ENCODE measurements at regions of chr11 and their contacts with region 1.

Region 1: DNA sequence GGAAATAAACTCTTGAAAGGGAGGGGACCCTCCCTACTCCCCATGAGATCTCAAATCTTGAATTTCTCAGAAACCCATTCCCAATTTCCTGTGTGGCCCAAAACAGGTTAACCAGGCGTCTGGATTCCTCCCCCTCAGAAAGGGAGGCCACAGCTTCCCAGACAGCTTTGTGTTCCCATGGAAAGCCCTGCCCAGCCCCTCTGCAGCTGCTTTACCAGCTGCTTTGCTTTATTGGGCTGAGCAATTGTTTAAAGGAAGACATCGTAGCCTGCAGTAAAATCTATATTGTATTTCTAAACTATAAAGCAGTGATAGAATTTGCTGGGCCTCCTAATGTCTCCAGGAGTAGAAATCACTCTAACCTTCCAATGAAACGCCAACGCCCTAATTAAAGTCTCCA is 97.4 kb downstream of the CHST1 start:
- DNase-seq: no peak
- H3K4me3 ChIP-seq: no peak overlapping the region
- H3K27ac ChIP-seq: no peak overlapping the region
- H3K4me1 ChIP-seq: no peaks in the 10 kb centered on the region
- H3K27me3 ChIP-seq: no peaks in the 10 kb centered on the region
- CTCF ChIP-seq: no peak

Region 2: DNA sequence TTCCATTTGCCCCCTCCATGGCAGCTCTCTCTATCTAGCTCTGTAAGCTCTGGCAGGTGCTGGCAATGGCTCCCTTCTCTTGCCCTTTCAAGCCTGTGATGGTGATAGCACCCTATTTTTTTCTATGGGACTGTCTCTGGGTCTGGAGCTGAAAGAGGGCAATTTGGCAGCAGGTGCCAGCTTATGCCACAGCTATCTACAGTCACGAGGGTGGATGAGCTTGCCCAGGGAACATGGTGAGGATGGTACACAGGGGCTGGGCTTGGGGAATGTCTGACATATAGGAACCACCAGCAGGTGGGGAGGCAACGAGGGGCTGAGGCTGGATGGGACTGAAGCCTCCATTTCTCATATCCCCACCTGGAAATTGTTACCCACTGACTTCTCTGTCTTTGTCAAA is 106.5 kb before region 1 on chr11:
- CTCF ChIA-PET with region 1: no interaction called
- dilution Hi-C with region 1: loop called (anchors 5 kb)
- in situ Hi-C with region 1: no loop called
- intact Hi-C with region 1: no loop called
- DNase-seq: no peak
- H3K4me3 ChIP-seq: no peak overlapping the region
- H3K27ac ChIP-seq: no peak overlapping the region
- H3K4me1 ChIP-seq: peaks cover 6% of the 10 kb centered on the region
- H3K27me3 ChIP-seq: no peaks in the 10 kb centered on the region
- CTCF ChIP-seq: no peak

Region 3: DNA sequence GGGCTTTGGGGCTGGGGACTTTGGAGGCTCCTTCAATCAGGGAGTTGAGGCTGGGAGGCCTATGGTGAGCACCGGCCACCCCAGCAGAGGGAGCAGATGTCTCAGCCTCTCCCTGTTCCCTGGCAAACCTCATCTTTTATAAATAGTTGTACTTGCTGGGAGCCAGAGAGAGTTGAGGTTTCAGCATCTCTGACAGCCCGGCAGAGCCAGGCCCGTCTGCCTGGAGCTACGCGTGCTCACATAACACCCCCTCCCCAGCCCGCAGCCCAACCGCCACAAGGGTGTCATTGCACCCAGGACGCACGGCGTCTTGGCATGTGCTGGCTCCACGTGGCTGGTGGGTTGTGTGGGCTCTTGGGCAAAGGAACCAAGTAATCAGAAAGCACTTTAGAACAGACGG is 29.7 kb before region 1 on chr11:
- CTCF ChIA-PET with region 1: no interaction called
- dilution Hi-C with region 1: loop called (anchors 5 kb)
- in situ Hi-C with region 1: no loop called
- intact Hi-C with region 1: no loop called
- DNase-seq: no peak
- H3K4me3 ChIP-seq: no peak overlapping the region
- H3K27ac ChIP-seq: no peak overlapping the region
- H3K4me1 ChIP-seq: no peaks in the 10 kb centered on the region
- H3K27me3 ChIP-seq: no peaks in the 10 kb centered on the region
- CTCF ChIP-seq: no peak

Region 4: GRCh38 chr11:45754261-45754709 is 186.2 kb after region 1 on chr11:
- CTCF ChIA-PET with region 1: no interaction called
- dilution Hi-C with region 1: no loop called
- in situ Hi-C with region 1: no loop called
- intact Hi-C with region 1: no loop called
- DNase-seq: no peak
- H3K4me3 ChIP-seq: no peak overlapping the region
- H3K27ac ChIP-seq: no peak overlapping the region
- H3K4me1 ChIP-seq: no peaks in the 10 kb centered on the region
- H3K27me3 ChIP-seq: peaks cover 2% of the 10 kb centered on the region
- CTCF ChIP-seq: no peak

Measured in mammary epithelial cell (primary cell).